ENCODE measurements at regions of chr19 and their contacts with region 1.

Region 1: GRCh38 chr19:6737284-6738046 is at the start of gene GPR108:
- DNase-seq: peak; percentile 99 to 100 (median 100)
- H3K4me3 ChIP-seq: peak within 1 kb of the TSS; percentile 42 to 98 (median 88)
- H3K27ac ChIP-seq: peak within 1 kb of the TSS; percentile 86 to 100 (median 99)
- H3K27me3 ChIP-seq: peaks cover 0 to 14% (median 0%) of the 10 kb centered on the region in 45 donors
- CTCF ChIP-seq: peak in 5 of 56 donors; percentile 4 to 28 (median 12)
- total RNA-seq, gene GPR108: 21.4 to 74.1 (median 47.4) TPM

Region 2: GRCh38 chr19:6378041-6378440 is 359.4 kb before region 1 on chr19:
- intact Hi-C with region 1: loop called in 1 of 2 experiments (anchors 5 kb)
- DNase-seq: peak in 1 of 10 donors; percentile 37
- H3K4me3 ChIP-seq: no peak overlapping the region
- H3K27ac ChIP-seq: peak overlapping the region in 12 of 59 donors; percentile 2 to 94 (median 18)
- H3K27me3 ChIP-seq: no peaks in the 10 kb centered on the region
- CTCF ChIP-seq: no peak

Region 3: GRCh38 chr19:6516659-6517291 is 220.7 kb before region 1 on chr19:
- intact Hi-C with region 1: loop called (anchors 2 to 5 kb)
- DNase-seq: peak; percentile 85 to 95 (median 93)
- H3K4me3 ChIP-seq: peak overlapping the region; percentile 52 to 87 (median 74)
- H3K27ac ChIP-seq: peak overlapping the region; percentile 6 to 100 (median 91)
- H3K27me3 ChIP-seq: no peaks in the 10 kb centered on the region
- CTCF ChIP-seq: peak; percentile 71 to 98 (median 95)

Region 4: GRCh38 chr19:6530386-6531161 is 206.9 kb before region 1 on chr19 and contains the start of gene TNFSF9:
- intact Hi-C with region 1: loop called in 1 of 2 experiments (anchors 5 kb)
- DNase-seq: peak; percentile 94 to 97 (median 96)
- H3K4me3 ChIP-seq: peak within 1 kb of the TSS; percentile 60 to 95 (median 82)
- H3K27ac ChIP-seq: peak within 1 kb of the TSS; percentile 10 to 97 (median 88)
- H3K27me3 ChIP-seq: peaks cover 0 to 5% (median 0%) of the 10 kb centered on the region in 45 donors
- CTCF ChIP-seq: peak in 15 of 56 donors; percentile 7 to 42 (median 22)
- total RNA-seq, gene TNFSF9: 2.4 to 16.3 (median 4.8) TPM

Region 5: GRCh38 chr19:6610934-6611852 is 126.3 kb before region 1 on chr19:
- intact Hi-C with region 1: no loop called
- DNase-seq: no peak
- H3K4me3 ChIP-seq: no peak overlapping the region
- H3K27ac ChIP-seq: no peak overlapping the region
- H3K27me3 ChIP-seq: peaks cover 0 to 33% (median 7%) of the 10 kb centered on the region in 45 donors
- CTCF ChIP-seq: no peak

Region 6: DNA sequence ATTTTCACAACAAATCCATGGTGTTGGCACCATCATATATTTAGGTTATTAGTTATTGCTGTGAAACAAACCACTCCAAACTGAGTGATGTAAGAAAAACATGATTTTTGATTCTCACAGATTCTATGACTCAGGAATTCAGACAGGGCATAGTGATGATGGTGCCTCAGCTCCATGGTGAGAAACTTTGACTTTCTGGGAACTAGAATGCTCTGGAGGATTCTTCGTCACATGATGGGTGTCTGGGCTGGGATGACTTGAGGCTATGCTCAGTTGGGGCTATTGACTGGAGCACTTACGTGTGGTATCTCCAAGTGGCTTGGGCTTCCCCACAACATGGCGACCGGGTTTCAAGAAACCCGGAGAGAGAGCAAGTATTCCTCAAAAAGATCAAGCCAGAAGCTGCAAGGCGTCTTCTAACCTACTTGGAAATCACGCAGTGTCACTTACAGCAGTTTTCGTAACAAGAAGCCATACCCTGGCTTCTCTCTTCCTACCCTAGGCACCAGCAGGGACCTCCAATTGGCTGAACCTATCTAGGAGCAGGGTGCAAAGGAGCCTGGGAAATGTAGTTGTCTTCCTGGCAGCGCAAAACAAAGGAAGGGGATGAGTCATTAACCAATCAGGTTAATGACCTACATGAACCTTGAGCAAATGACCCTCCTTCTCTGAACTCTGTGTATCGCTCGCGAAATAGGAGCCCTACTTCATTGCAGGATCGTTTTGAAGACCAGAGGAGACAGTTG is 57.4 kb after region 1 on chr19:
- intact Hi-C with region 1: no loop called
- DNase-seq: no peak
- H3K4me3 ChIP-seq: no peak overlapping the region
- H3K27ac ChIP-seq: no peak overlapping the region
- H3K27me3 ChIP-seq: peaks cover 0 to 12% (median 0%) of the 10 kb centered on the region in 45 donors
- CTCF ChIP-seq: no peak

Region 7: DNA sequence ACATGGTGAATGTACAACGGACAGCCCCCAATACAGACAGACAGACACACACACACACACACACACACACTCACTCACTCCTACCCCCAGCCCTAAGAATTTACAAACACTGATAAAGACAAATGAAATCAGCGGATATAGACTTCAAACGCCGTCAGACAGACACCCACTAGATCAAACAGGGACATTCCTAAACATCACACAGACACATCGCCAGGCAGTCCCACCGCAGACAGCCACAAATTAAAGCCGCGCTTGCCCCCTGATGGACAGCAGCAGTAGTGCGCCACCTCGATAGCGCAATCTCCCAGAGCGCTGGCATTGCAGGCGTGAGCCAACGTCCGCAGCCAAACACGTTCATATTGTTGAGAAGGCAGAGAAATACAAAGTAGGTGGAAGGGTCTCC is 125.2 kb after region 1 on chr19:
- intact Hi-C with region 1: loop called (anchors 1 kb)
- DNase-seq: peak; percentile 19 to 83 (median 78)
- H3K4me3 ChIP-seq: peak overlapping the region in 48 of 59 donors; percentile 7 to 57 (median 37)
- H3K27ac ChIP-seq: no peak overlapping the region
- H3K27me3 ChIP-seq: peaks cover 0 to 7% (median 0%) of the 10 kb centered on the region in 45 donors
- CTCF ChIP-seq: peak; percentile 55 to 91 (median 81)

Region 8: GRCh38 chr19:7829561-7830271 is 1092.3 kb after region 1 on chr19 and contains the start of gene EVI5L:
- intact Hi-C with region 1: loop called in 1 of 2 experiments (anchors 5 kb)
- DNase-seq: peak; percentile 99 to 100 (median 100)
- H3K4me3 ChIP-seq: peak within 1 kb of the TSS; percentile 36 to 84 (median 72)
- H3K27ac ChIP-seq: peak within 1 kb of the TSS in 39 of 59 donors; percentile 12 to 87 (median 57)
- H3K27me3 ChIP-seq: no peaks in the 10 kb centered on the region
- CTCF ChIP-seq: peak in 14 of 56 donors; percentile 6 to 45 (median 16)
- total RNA-seq, gene EVI5L: 47.6 to 92.0 (median 62.5) TPM